ENCODE measurements at regions of chr11 and their contacts with region 1.

Region 1: GRCh38 chr11:111601979-111602864 is at the start of gene SIK2:
- DNase-seq: peak; percentile 59
- H3K4me3 ChIP-seq: peak within 1 kb of the TSS; percentile 99
- H3K27me3 ChIP-seq: no peaks in the 10 kb centered on the region
- CTCF ChIP-seq: peak; percentile 92
- polyA plus RNA-seq, gene SIK2: 17.6 and 24.2 TPM in 2 replicates

Region 2: DNA sequence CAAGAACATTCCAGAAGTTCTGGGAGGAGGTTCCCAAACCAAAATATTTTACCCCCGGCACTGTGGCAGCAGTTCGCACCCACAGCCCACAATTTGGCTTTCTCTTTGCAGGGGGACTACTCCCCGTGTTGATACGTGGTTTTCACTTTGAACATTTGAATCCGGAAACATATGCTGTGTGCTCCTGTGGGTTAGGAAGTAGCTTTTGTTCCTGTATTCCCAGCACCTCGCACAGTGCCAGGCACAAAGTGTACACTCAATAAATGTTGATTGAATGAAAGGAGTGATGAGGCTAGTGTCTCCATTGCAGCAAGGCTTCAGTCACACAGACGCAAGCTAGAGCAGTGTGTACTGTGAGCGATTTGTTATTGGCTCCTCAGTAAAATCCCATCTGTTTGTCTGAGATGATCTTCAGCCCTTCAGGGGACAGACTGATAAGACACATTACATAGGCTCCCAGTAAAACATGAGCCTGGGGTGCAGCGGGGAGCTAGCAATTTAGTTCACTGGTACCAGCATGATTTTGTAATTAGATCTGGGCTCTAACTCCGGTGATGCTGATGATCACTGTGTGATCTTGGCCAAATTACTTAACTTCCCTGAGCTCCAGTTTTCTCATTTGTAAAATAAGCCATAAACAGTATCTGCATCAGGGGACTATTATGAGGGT is 59.5 kb before region 1 on chr11:
- CTCF ChIA-PET with region 1: no interaction called
- POLR2A ChIA-PET with region 1: no interaction called
- DNase-seq: no peak
- H3K4me3 ChIP-seq: peak overlapping the region; percentile 56
- H3K27me3 ChIP-seq: no peaks in the 10 kb centered on the region
- CTCF ChIP-seq: no peak

Region 3: DNA sequence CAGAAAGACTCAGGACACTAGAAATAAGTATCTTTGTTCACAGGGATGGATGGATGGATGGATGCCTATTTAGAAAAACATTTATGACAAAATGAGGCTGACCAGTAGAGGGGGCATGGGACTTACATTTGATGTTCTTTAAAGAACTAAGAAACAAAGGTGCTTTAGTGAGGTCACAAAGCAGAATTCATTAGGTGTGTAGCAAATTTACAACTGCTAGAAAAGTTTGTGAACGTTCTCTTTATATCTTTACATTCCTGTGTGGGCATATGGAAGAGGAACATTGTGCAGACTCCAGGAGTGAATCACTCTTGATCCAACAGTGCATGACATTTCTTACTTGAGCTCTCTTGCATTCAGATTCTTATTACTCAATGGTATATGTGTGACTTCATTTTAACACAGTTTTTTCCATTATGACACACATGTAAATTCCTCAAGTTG is 15.8 kb before region 1 on chr11:
- CTCF ChIA-PET with region 1: interaction called, 42 read pairs
- POLR2A ChIA-PET with region 1: no interaction called
- DNase-seq: no peak
- H3K4me3 ChIP-seq: no peak overlapping the region
- H3K27me3 ChIP-seq: no peaks in the 10 kb centered on the region
- CTCF ChIP-seq: peak; percentile 70

Region 4: DNA sequence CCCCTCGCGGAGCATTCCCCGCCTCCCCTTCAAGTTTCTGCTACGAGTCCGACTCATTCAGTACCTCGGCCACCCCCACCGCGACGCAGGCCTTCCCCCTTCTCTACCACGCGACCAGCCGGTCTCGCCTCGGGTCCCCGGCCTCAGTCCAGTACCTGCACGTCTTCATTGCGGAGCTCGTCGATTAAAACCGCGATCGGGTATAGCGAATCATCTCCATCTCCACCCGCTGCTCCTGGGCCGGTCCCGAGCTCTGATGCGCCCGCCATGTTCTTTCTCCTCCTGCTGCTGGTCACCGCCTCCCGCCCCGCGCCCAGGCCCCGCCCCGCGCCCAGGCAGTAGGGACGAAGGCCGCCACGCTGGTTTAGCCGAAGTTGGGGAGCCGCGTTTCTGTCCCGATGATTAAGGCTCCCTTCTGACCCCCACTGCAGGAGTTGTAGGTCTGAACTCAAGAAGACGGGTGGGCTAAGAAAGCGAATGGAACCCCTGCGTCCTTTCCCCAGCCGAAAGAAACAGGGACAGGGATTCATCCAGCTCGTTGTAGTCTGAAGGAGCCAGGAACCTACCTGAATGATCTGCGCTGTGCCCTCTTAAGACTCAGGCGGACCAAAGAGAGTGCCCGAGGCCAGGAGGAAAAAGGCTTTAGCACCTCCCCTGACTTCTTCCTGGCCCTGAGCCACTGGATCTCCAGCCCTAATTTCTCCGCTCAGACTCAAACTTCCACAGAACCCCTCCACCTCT is 164.0 kb after region 1 on chr11 and contains the start of gene PPP2R1B:
- CTCF ChIA-PET with region 1: interaction called, 11 read pairs
- POLR2A ChIA-PET with region 1: no interaction called
- DNase-seq: no peak
- H3K4me3 ChIP-seq: peak within 1 kb of the TSS; percentile 81
- H3K27me3 ChIP-seq: no peaks in the 10 kb centered on the region
- CTCF ChIP-seq: no peak
- polyA plus RNA-seq, gene PPP2R1B: 20.7 and 32.5 TPM in 2 replicates

Region 5: DNA sequence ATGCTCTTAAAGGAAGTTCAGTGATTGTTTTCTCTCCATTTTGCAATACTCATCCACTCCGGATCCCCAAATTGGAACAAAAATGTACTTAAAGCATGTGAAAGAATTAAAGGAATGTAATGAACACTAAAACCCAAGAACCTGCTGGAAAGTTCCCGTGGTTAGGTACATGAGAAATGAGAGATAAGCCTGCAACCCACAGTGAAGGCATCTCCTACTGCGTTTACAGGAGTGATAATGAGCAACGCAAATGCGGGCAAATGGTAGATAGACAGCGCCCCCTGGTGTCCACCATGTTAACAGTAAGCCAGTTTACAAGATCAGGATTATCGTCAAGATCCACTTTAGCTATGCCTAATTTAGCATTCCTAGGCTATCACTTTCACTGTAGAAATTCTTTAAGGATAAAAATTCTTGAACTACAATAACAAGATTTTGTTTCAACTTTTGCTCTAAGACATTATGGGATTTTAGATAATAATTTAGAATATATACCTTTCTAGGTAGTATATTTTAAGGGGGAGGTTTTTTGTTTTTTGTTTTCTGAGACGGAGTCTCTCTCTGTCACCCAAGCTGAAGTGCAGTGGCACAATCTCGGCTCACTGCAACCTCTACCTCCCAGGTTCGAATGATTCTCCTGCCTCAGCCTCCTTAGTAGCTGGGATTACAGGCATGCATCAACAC is 239.3 kb after region 1 on chr11:
- CTCF ChIA-PET with region 1: interaction called, 34 read pairs
- POLR2A ChIA-PET with region 1: no interaction called
- DNase-seq: peak; percentile 86
- H3K4me3 ChIP-seq: no peak overlapping the region
- H3K27me3 ChIP-seq: no peaks in the 10 kb centered on the region
- CTCF ChIP-seq: peak; percentile 76

Measured in BJ (cell line).